CD4-positive, alpha-beta T cell (primary cell): ENCODE measurements at regions of chr15 and their contacts with region 1.

Region 1: DNA sequence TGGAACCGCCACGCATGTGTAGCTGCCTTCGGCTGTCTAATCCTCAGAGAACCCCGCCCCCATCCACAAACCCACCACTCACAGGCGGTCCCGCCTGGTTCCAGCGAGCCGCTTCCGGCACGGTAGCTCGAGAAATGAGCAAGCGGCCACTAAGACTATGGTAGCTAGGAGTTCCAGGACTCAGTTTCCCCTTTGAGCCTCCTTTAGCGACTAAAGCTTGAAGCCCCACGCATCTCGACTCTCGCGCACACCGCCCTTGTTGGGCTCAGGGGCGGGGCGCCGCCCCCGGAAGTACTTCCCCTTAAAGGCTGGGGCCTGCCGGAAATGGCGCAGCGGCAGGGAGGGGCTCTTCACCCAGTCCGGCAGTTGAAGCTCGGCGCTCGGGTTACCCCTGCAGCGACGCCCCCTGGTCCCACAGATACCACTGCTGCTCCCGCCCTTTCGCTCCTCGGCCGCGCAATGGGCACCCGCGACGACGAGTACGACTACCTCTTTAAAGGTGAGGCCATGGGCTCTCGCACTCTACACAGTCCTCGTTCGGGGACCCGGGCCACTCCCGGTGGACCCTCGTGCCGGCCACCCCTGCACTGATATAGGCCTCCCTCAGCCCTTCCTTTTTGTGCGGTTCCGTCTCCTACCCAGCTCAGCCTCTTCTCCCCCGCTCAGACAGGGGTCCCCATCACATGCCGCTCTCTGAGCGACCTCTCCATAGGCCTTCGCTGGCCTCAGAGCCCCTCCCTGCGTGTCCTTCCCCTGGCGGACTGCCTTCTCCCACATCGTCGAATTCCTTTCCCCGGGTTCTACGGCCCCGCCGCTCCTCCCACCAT is at the start of gene RAB11A:
- DNase-seq: peak; percentile 87 to 98 (median 93)
- ATAC-seq: peak; percentile 85
- H3K4me3 ChIP-seq: peak within 1 kb of the TSS; percentile 98
- H3K4me3 Mint-ChIP-seq: peak within 1 kb of the TSS; percentile 99
- H3K27ac ChIP-seq: peak within 1 kb of the TSS; percentile 80 to 96
- H3K27ac Mint-ChIP-seq: peak within 1 kb of the TSS; percentile 100
- H3K4me1 ChIP-seq: peaks cover 21% of the 10 kb centered on the region
- H3K4me1 Mint-ChIP-seq: peaks cover 49% of the 10 kb centered on the region
- H3K27me3 ChIP-seq: no peaks in the 10 kb centered on the region
- H3K27me3 Mint-ChIP-seq: peaks cover 3% of the 10 kb centered on the region
- CTCF ChIP-seq: peak; percentile 48
- total RNA-seq, gene RAB11A: 98.5 to 102 TPM

Region 2: DNA sequence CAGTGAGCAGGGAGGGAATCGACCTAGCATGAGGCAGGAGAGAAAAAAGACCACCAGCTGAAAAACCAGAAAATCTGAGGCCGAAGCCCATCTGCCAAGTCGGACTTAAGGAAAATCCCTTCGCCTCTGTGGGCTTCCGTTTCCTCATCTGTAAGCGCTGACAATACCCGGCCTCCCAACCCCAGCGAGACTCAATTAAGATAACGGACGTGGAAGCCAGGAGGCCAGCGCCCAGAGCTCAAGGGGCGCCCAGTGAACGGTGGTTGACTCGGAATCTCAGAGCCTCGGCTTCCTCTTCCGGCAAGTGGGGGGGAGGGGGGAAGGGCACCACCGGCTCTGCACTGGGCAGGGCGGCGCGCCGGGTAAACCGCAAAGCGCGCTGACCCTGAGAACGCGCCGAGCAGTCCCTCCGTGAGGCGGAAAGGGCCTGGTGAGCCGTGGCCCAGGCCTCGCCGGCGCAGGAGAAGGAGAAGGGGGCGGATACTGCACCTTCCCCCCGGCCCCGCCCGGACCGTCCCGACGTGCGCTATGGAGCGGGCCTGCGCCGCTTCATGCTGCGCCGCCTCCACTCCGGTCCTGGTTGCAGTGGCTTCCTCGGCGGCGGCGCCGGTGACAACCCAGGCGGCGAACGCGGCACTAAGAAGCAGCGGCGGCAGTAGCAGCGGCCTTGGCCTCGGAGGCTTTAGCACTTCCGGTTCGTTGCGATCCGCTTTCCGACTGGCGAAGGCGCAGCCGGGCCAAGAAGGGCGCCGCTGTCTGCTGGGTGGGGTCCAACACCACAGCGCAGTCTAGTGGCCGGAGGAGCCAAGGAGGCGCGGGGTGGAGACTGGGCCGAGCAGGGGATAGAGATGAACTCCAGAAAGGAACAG is 352.1 kb before region 1 on chr15 and contains the start of gene DPP8:
- CTCF ChIA-PET with region 1: no interaction called
- POLR2A ChIA-PET with region 1: interaction called, 5 read pairs
- intact Hi-C with region 1: loop called in 1 of 2 experiments (anchors 1 kb)
- DNase-seq: peak; percentile 89 to 96 (median 93)
- ATAC-seq: peak; percentile 94
- H3K4me3 ChIP-seq: peak within 1 kb of the TSS; percentile 92
- H3K4me3 Mint-ChIP-seq: peak within 1 kb of the TSS; percentile 95
- H3K27ac ChIP-seq: peak within 1 kb of the TSS; percentile 86
- H3K27ac Mint-ChIP-seq: peak within 1 kb of the TSS; percentile 87
- H3K4me1 ChIP-seq: peaks cover 22% of the 10 kb centered on the region
- H3K4me1 Mint-ChIP-seq: peaks cover 51% of the 10 kb centered on the region
- H3K27me3 ChIP-seq: no peaks in the 10 kb centered on the region
- H3K27me3 Mint-ChIP-seq: no peaks in the 10 kb centered on the region
- CTCF ChIP-seq: peak; percentile 91
- total RNA-seq, gene DPP8: 41.2 to 45.4 TPM

Region 3: DNA sequence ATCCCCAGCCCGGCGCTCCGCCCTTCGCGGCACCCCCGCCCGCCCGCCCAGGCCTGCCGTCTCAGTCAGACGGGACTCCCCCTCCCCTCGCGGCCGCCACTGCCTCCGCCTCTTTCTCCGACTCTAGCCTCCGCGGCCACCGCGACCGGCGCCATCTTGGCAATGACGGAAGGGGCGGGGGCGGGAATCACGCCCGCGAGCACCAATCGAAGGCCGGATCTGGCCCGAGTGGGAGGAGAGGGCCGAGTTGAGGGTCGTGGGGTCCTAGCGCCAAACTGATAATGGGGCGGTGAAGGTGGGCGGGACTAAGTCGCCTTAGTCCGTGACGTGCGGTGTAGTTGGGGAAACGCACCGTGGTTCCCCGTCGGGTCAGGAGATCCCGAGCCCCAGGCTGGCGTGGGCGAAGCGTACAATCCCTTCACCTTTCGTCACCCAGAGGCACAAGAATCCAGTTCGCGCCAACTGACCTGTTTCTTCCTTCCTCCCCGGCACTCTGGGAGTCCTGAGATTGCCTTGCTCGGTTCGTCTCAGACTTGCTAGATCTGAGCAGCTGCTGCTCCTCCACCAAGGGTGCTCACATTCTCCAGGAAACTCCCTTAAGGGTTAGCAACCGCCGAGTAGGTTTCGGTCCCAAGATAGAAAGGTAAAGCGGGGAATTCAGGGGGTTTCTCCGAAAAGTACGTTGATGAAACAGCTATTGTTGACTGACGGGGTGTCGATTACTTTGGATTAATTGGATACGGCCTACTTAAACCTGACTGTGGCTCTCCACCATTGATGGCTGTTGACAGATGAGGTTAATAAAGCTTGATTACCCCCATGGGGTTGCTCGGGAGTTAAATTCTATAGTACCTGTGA is 77.0 kb before region 1 on chr15 and contains the start of gene DENND4A:
- CTCF ChIA-PET with region 1: interaction called, 15 read pairs
- POLR2A ChIA-PET with region 1: interaction called, 63 read pairs
- intact Hi-C with region 1: loop called (anchors 1 kb)
- DNase-seq: peak; percentile 97 to 100 (median 98)
- ATAC-seq: peak; percentile 79
- H3K4me3 ChIP-seq: peak within 1 kb of the TSS; percentile 96
- H3K4me3 Mint-ChIP-seq: peak within 1 kb of the TSS; percentile 90
- H3K27ac ChIP-seq: peak within 1 kb of the TSS; percentile 99
- H3K27ac Mint-ChIP-seq: peak within 1 kb of the TSS; percentile 99
- H3K4me1 ChIP-seq: peaks cover 28% of the 10 kb centered on the region
- H3K4me1 Mint-ChIP-seq: peaks cover 64% of the 10 kb centered on the region
- H3K27me3 ChIP-seq: no peaks in the 10 kb centered on the region
- H3K27me3 Mint-ChIP-seq: no peaks in the 10 kb centered on the region
- CTCF ChIP-seq: no peak
- total RNA-seq, gene DENND4A: 64.1 to 69.6 TPM

Region 4: GRCh38 chr15:65856821-65857455 is 12.4 kb before region 1 on chr15:
- CTCF ChIA-PET with region 1: interaction called, 8 read pairs
- POLR2A ChIA-PET with region 1: interaction called, 14 read pairs
- intact Hi-C with region 1: no loop called
- DNase-seq: peak; percentile 73 to 91 (median 80)
- ATAC-seq: peak; percentile 94
- H3K4me3 ChIP-seq: no peak overlapping the region
- H3K4me3 Mint-ChIP-seq: no peak overlapping the region
- H3K27ac ChIP-seq: no peak overlapping the region
- H3K27ac Mint-ChIP-seq: no peak overlapping the region
- H3K4me1 ChIP-seq: no peaks in the 10 kb centered on the region
- H3K4me1 Mint-ChIP-seq: peaks cover 6% of the 10 kb centered on the region
- H3K27me3 ChIP-seq: no peaks in the 10 kb centered on the region
- H3K27me3 Mint-ChIP-seq: no peaks in the 10 kb centered on the region
- CTCF ChIP-seq: peak; percentile 92

Region 5: GRCh38 chr15:65980824-65981456 is 111.6 kb after region 1 on chr15:
- CTCF ChIA-PET with region 1: interaction called, 4 read pairs
- POLR2A ChIA-PET with region 1: interaction called, 4 read pairs
- intact Hi-C with region 1: loop called in 1 of 2 experiments (anchors 5 kb)
- DNase-seq: peak in 4 of 14 experiments; percentile 5 to 32 (median 24)
- ATAC-seq: no peak
- H3K4me3 ChIP-seq: no peak overlapping the region
- H3K4me3 Mint-ChIP-seq: peak overlapping the region; percentile 38
- H3K27ac ChIP-seq: no peak overlapping the region
- H3K27ac Mint-ChIP-seq: no peak overlapping the region
- H3K4me1 ChIP-seq: peaks cover 12% of the 10 kb centered on the region
- H3K4me1 Mint-ChIP-seq: peaks cover 15% of the 10 kb centered on the region
- H3K27me3 ChIP-seq: peaks cover 20 to 23% of the 10 kb centered on the region in 2 experiments
- H3K27me3 Mint-ChIP-seq: peaks cover 34% of the 10 kb centered on the region
- CTCF ChIP-seq: no peak

Region 6: GRCh38 chr15:65998486-65998885 is 129.1 kb after region 1 on chr15:
- CTCF ChIA-PET with region 1: no interaction called
- POLR2A ChIA-PET with region 1: no interaction called
- intact Hi-C with region 1: no loop called
- DNase-seq: no peak
- ATAC-seq: no peak
- H3K4me3 ChIP-seq: no peak overlapping the region
- H3K4me3 Mint-ChIP-seq: no peak overlapping the region
- H3K27ac ChIP-seq: no peak overlapping the region
- H3K27ac Mint-ChIP-seq: no peak overlapping the region
- H3K4me1 ChIP-seq: no peaks in the 10 kb centered on the region
- H3K4me1 Mint-ChIP-seq: no peaks in the 10 kb centered on the region
- H3K27me3 ChIP-seq: peaks cover 0 to 9% of the 10 kb centered on the region in 2 experiments
- H3K27me3 Mint-ChIP-seq: peaks cover 49% of the 10 kb centered on the region
- CTCF ChIP-seq: no peak